ENCODE measurements at regions of chr9 and their contacts with region 1.

Region 1: GRCh38 chr9:83622939-83623678 is at the start of gene IDNK:
- DNase-seq: peak; percentile 36 to 93 (median 50)

Region 2: DNA sequence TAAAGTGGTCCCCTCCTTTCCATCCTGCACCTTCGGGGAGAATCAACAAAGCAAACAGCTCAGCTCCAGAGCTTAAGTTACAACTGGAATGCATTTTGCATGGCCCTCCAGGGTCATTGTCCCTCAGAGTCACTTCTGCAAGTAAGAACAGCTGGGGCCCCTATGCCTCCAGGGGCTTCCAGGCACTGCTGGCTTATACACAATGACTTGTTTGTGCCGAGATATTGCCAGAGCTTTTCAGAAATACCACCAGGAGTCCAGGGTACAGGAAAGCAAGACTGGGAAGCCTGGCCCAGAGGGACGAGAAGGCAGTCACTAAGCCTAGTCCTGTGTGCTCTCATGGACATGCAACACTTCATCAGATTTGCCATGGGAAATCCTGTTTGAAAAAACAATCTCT is 96.2 kb before region 1 on chr9:
- intact Hi-C with region 1: no loop called
- DNase-seq: no peak

Region 3: DNA sequence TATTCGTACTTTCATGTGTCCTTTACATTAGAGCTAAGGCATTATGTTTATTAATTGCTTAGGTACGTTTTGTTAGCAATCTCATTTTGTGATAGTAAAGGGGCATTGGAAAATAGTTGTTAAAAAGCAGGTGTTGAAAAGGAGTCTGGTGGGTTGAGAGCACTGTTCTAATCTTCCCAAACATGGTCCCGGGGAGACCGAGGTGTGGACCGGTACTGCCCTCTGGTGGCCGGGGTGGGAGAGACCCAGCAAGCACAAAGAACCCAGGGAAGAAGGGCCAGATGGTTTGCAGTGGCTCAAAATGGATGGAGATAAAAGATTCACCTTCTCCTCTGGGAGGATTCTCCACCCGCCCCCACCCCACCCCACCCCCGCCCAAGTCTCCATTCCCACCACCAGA is 26.0 kb after region 1 on chr9:
- intact Hi-C with region 1: loop called (anchors 2 kb)
- DNase-seq: peak in 8 of 10 donors; percentile 40 to 93 (median 64)

Region 4: DNA sequence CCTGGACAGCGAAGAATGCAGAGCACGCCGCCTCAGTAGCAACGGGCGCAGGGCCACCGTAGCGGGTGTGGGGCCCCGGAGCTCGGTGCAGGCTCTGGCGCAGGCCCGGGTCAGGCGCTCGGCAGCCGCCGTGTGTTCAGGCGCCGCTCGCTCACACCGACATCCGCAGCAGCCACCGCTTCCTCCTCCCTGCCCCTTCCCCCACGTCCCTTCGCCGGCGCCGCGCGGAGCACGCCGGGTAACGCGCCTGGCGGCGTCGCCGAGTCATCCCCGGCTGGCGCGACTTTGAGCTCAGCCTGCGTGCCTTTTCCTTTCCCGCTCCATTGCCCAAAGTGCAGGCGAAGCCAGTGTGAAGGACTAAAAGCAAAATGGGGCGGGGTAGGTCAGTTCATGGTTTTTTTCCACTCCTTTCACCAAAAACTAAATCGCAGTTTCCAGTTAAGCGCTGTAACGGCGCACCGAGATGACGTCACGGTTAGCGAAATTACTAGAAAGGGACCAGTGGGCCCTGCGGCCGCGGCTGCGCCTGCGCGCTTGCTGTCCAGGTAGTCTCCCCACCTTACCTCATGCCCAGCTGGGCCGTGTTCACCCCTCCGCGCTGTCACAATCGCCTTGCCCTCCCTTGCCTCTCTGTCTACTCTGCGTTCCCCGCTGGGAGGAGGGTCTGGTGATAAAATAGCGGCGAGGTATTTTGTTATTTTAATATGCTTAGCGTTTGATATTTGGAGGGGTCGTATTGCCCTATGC is 84.8 kb after region 1 on chr9 and contains the start of gene UBQLN1:
- intact Hi-C with region 1: loop called (anchors 2 kb)
- DNase-seq: peak; percentile 83 to 97 (median 88)

Measured in posterior cingulate gyrus (tissue), 11 donors.